Naive thymus-derived CD4-positive, alpha-beta T cell (primary cell): ENCODE measurements at regions of chr19 and their contacts with region 1.

Region 1: GRCh38 chr19:46704379-46705076 is 12.4 kb downstream of the PRKD2 start:
- DNase-seq: peak; percentile 69 to 93 (median 82)
- ATAC-seq: peak; percentile 98
- H3K4me3 ChIP-seq: no peak overlapping the region
- H3K4me3 Mint-ChIP-seq: peak overlapping the region in 1 of 10 donors; percentile 35
- H3K27ac ChIP-seq: no peak overlapping the region
- H3K27ac Mint-ChIP-seq: peak overlapping the region; percentile 16 to 90 (median 68)
- H3K4me1 ChIP-seq: peaks cover 0 to 4% of the 10 kb centered on the region in 2 donors
- H3K4me1 Mint-ChIP-seq: peaks cover 7 to 17% (median 12%) of the 10 kb centered on the region in 7 donors
- H3K27me3 ChIP-seq: no peaks in the 10 kb centered on the region
- H3K27me3 Mint-ChIP-seq: no peaks in the 10 kb centered on the region

Region 2: DNA sequence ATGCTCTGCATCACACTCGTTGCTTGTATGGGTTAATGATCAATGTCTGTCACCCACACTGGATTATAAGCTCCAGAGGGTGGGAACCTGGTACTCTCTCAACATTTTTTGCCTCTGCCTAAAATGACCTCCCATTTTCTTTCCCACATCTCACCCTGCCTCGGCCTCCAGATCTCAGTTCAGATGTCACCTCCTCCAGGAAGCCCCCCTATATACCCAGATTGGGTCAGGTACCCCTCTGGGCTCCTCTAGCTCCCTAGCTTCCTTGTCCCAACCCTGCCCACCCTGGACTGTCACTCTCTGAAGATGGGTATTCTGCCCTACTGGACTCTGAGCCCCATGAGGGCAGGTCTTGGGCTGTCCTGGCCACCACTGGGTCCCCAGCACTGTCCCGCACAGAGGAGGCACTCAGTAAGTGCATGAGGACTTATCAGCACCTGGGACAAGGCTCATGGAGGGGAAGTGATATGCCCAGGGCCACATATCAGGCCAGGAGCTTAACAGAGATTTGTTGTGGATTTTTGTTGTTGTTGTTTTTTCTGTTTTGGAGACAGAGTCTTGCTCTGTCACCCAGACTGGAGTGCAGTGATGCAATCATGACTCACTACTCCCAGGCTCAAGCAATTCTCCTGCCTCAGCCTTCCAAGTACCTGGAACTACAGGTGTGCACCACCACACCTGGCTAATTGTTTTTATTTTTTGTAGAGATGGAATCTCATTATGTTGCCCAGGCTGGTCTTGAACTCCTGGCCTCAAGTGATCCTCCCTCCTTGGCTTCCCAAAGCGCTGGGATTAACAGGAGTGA is 11.4 kb before region 1 on chr19:
- CTCF ChIA-PET with region 1: interaction called, 10 read pairs
- POLR2A ChIA-PET with region 1: interaction called, 5 read pairs
- intact Hi-C with region 1: no loop called
- DNase-seq: no peak
- ATAC-seq: no peak
- H3K4me3 ChIP-seq: no peak overlapping the region
- H3K4me3 Mint-ChIP-seq: no peak overlapping the region
- H3K27ac ChIP-seq: peak overlapping the region; percentile 34
- H3K27ac Mint-ChIP-seq: peak overlapping the region in 7 of 9 donors; percentile 47 to 78 (median 64)
- H3K4me1 ChIP-seq: no peaks in the 10 kb centered on the region
- H3K4me1 Mint-ChIP-seq: peaks cover 0 to 7% (median 0%) of the 10 kb centered on the region in 7 donors
- H3K27me3 ChIP-seq: no peaks in the 10 kb centered on the region
- H3K27me3 Mint-ChIP-seq: no peaks in the 10 kb centered on the region

Region 3: GRCh38 chr19:46728693-46729676 is 24.5 kb after region 1 on chr19:
- CTCF ChIA-PET with region 1: interaction called, 136 read pairs
- POLR2A ChIA-PET with region 1: interaction called, 30 read pairs
- intact Hi-C with region 1: loop called (anchors 1 kb)
- DNase-seq: peak; percentile 66 to 91 (median 82)
- ATAC-seq: peak; percentile 77
- H3K4me3 ChIP-seq: no peak overlapping the region
- H3K4me3 Mint-ChIP-seq: peak overlapping the region in 1 of 10 donors; percentile 29
- H3K27ac ChIP-seq: no peak overlapping the region
- H3K27ac Mint-ChIP-seq: peak overlapping the region in 6 of 9 donors; percentile 7 to 59 (median 28)
- H3K4me1 ChIP-seq: peaks cover 0 to 5% of the 10 kb centered on the region in 2 donors
- H3K4me1 Mint-ChIP-seq: peaks cover 8 to 32% (median 16%) of the 10 kb centered on the region in 7 donors
- H3K27me3 ChIP-seq: no peaks in the 10 kb centered on the region
- H3K27me3 Mint-ChIP-seq: no peaks in the 10 kb centered on the region

Region 4: GRCh38 chr19:46746281-46747013 is 41.9 kb after region 1 on chr19 and contains the start of gene STRN4:
- CTCF ChIA-PET with region 1: interaction called, 6 read pairs
- POLR2A ChIA-PET with region 1: no interaction called
- intact Hi-C with region 1: loop called in 1 of 2 experiments (anchors 1 kb)
- DNase-seq: peak in 8 of 9 donors; percentile 29 to 65 (median 50)
- ATAC-seq: peak; percentile 87
- H3K4me3 ChIP-seq: peak within 1 kb of the TSS; percentile 73
- H3K4me3 Mint-ChIP-seq: peak within 1 kb of the TSS; percentile 84 to 97 (median 90)
- H3K27ac ChIP-seq: peak within 1 kb of the TSS; percentile 91
- H3K27ac Mint-ChIP-seq: peak within 1 kb of the TSS; percentile 74 to 94 (median 87)
- H3K4me1 ChIP-seq: peaks cover 21 to 26% of the 10 kb centered on the region in 2 donors
- H3K4me1 Mint-ChIP-seq: peaks cover 43 to 64% (median 58%) of the 10 kb centered on the region in 7 donors
- H3K27me3 ChIP-seq: no peaks in the 10 kb centered on the region
- H3K27me3 Mint-ChIP-seq: no peaks in the 10 kb centered on the region
- total RNA-seq, gene STRN4: 81.3 to 120 (median 90.4) TPM